MCF 10A (cell line): ENCODE measurements at regions of chr16 and their contacts with region 1.

Region 1: DNA sequence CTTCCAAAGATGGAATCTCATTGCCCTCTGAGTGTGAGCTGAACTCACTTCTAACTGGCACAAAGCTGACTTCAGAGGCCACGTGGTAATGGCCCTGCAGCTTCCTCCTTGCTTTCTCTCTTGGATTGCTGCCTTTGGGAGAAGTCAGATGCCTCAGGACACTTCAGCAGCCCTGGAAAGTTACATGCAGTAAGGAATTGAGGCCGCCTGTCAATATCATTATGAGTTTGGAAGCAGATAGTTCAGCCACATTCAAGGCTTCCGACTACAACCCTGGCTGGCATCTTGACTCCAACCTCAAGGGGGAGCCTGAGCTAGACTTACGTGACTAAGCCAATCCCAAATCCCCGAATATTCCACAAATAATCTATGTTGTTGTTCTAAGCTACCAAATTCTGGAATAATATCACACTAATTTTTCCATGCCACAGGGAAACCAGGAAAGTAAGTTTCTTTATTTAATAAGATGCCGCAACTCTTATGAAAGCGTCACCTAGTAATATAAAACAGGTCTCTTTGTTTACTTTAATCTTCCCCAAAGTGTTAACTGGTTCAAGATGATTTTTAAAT is 13.6 kb downstream of the CEP20 start:
- DNase-seq: peak; percentile 75
- H3K4me3 Mint-ChIP-seq: no peak overlapping the region
- H3K27ac Mint-ChIP-seq: peak overlapping the region; percentile 2
- H3K4me1 Mint-ChIP-seq: peaks cover 13% of the 10 kb centered on the region
- H3K27me3 Mint-ChIP-seq: no peaks in the 10 kb centered on the region
- CTCF ChIP-seq: peak; percentile 70

Region 2: DNA sequence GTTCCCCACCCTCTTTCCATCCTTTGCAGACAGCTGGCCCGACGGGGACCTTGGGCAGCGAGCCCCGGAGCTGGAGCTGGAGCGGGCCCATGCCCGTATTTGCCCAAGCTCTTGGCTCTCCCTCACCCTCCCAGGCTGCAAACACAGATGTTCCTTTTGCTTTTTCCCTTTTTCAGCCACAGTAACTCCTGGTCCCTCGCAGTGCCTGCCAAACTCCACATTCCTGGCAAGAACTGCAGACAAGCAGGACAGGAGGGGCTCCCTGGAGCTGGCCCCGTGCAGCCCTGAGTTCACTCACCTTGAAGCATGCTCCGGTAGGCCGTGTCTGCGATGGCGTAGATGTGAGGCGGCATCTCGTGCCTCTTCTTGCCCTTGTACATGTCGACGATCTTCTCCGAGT is 51.9 kb before region 1 on chr16:
- CTCF ChIA-PET with region 1: interaction called, 11 read pairs
- POLR2A ChIA-PET with region 1: no interaction called
- intact Hi-C with region 1: no loop called
- DNase-seq: no peak
- H3K4me3 Mint-ChIP-seq: no peak overlapping the region
- H3K27ac Mint-ChIP-seq: no peak overlapping the region
- H3K4me1 Mint-ChIP-seq: no peaks in the 10 kb centered on the region
- H3K27me3 Mint-ChIP-seq: peaks cover 26% of the 10 kb centered on the region
- CTCF ChIP-seq: no peak

Region 3: DNA sequence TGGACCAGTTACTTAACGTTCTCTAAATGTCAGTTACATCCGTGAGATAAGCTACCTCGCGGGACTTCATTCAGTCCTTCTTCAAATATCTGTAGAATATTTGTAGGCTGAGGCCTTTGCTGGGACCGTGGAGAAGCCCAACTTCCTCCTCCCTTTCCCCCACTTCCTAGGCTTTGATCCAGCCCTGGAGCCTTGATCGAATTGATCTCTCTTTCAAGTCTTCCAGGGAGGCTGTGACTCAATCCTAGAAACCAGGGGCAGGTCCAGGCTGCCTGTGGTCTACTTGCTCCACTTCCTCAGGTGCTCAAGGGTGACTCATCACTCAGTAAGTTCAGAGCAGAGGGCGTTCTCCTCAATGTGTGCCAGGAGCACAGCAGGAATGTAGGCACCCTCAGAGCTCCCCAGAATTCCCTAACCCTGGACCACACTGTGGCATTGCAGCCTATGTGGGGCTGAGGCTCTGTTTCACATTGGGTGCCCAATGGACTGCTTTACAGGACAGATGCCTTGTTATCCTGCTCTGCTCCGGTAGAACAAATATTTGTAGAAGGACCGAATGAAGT is 24.8 kb after region 1 on chr16:
- CTCF ChIA-PET with region 1: interaction called, 9 read pairs
- POLR2A ChIA-PET with region 1: interaction called, 20 read pairs
- intact Hi-C with region 1: no loop called
- DNase-seq: peak; percentile 96
- H3K4me3 Mint-ChIP-seq: peak overlapping the region; percentile 9
- H3K27ac Mint-ChIP-seq: peak overlapping the region; percentile 87
- H3K4me1 Mint-ChIP-seq: peaks cover 27% of the 10 kb centered on the region
- H3K27me3 Mint-ChIP-seq: no peaks in the 10 kb centered on the region
- CTCF ChIP-seq: no peak

Region 4: GRCh38 chr16:15966420-15967222 is 91.8 kb after region 1 on chr16:
- CTCF ChIA-PET with region 1: interaction called, 15 read pairs
- POLR2A ChIA-PET with region 1: interaction called, 13 read pairs
- intact Hi-C with region 1: no loop called
- DNase-seq: peak; percentile 91
- H3K4me3 Mint-ChIP-seq: peak overlapping the region; percentile 30
- H3K27ac Mint-ChIP-seq: peak overlapping the region; percentile 75
- H3K4me1 Mint-ChIP-seq: peaks cover 24% of the 10 kb centered on the region
- H3K27me3 Mint-ChIP-seq: no peaks in the 10 kb centered on the region
- CTCF ChIP-seq: no peak

Region 5: GRCh38 chr16:16080465-16081065 is 205.7 kb after region 1 on chr16:
- CTCF ChIA-PET with region 1: interaction called, 15 read pairs
- POLR2A ChIA-PET with region 1: no interaction called
- intact Hi-C with region 1: no loop called
- DNase-seq: no peak
- H3K4me3 Mint-ChIP-seq: no peak overlapping the region
- H3K27ac Mint-ChIP-seq: no peak overlapping the region
- H3K4me1 Mint-ChIP-seq: no peaks in the 10 kb centered on the region
- H3K27me3 Mint-ChIP-seq: no peaks in the 10 kb centered on the region
- CTCF ChIP-seq: no peak

Region 6: GRCh38 chr16:16122264-16122663 is 247.4 kb after region 1 on chr16:
- CTCF ChIA-PET with region 1: interaction called, 66 read pairs
- POLR2A ChIA-PET with region 1: interaction called, 5 read pairs
- intact Hi-C with region 1: loop called (anchors 1 kb)
- DNase-seq: no peak
- H3K4me3 Mint-ChIP-seq: no peak overlapping the region
- H3K27ac Mint-ChIP-seq: no peak overlapping the region
- H3K4me1 Mint-ChIP-seq: no peaks in the 10 kb centered on the region
- H3K27me3 Mint-ChIP-seq: no peaks in the 10 kb centered on the region
- CTCF ChIP-seq: no peak

Region 7: GRCh38 chr16:16137056-16137455 is 262.2 kb after region 1 on chr16:
- CTCF ChIA-PET with region 1: interaction called, 11 read pairs
- POLR2A ChIA-PET with region 1: no interaction called
- intact Hi-C with region 1: no loop called
- DNase-seq: no peak
- H3K4me3 Mint-ChIP-seq: no peak overlapping the region
- H3K27ac Mint-ChIP-seq: no peak overlapping the region
- H3K4me1 Mint-ChIP-seq: no peaks in the 10 kb centered on the region
- H3K27me3 Mint-ChIP-seq: no peaks in the 10 kb centered on the region
- CTCF ChIP-seq: no peak